Body of pancreas (tissue), 4 donors: ENCODE measurements at regions of chr10 and their contacts with region 1.

Region 1: DNA sequence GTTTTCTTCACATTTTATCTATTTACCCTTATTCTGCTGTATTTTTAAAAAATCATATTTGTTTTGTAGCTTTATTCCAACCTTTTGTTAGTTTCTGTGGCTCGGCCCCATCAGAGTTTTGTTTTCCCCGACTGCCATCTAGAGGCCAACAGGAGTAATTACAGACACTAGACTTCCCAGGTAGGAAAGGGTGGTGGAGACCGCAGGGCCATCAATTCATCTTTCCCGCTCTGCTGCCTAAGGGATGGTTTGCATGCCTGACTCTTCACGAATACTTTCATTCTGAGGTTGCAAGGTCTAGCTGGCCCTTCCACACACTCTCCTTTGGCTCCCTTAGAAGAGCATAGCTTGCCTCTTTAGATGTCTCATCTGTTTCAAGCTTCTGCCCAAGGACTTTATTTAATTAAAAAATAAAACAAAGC is 38.3 kb downstream of the LYZL2 start:
- DNase-seq: peak; percentile 25 to 46 (median 39)
- ATAC-seq: peak; percentile 68
- H3K4me3 ChIP-seq: no peak overlapping the region
- H3K27ac ChIP-seq: no peak overlapping the region
- H3K4me1 ChIP-seq: no peaks in the 10 kb centered on the region
- H3K27me3 ChIP-seq: no peaks in the 10 kb centered on the region
- CTCF ChIP-seq: peak; percentile 42 to 82 (median 76)
- POLR2A ChIP-seq: no peak

Region 2: DNA sequence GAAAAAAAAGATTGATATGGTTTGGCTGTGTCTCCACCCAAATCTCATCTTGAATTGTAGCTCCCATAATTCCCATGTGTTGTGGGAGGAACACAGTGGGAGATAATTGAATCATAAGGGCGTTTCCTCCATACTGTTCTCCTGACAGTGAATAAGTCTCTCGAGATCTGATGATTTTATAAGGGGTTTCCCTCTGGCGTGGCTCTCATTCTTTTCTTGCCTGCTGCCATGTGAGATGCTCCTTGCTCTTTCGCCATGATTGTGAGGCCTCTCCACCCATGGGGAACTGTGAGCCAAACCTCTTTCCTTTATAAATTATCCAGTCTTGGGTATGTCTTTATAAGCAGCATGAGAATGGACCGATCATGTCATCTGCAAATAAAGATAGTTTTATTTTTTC is 186.7 kb before region 1 on chr10:
- intact Hi-C with region 1: loop called (anchors 10 kb)
- DNase-seq: no peak
- ATAC-seq: no peak
- H3K4me3 ChIP-seq: no peak overlapping the region
- H3K27ac ChIP-seq: no peak overlapping the region
- H3K4me1 ChIP-seq: no peaks in the 10 kb centered on the region
- H3K27me3 ChIP-seq: no peaks in the 10 kb centered on the region
- CTCF ChIP-seq: no peak
- POLR2A ChIP-seq: no peak

Region 3: GRCh38 chr10:30829909-30830308 is 238.6 kb after region 1 on chr10:
- intact Hi-C with region 1: no loop called
- DNase-seq: no peak
- ATAC-seq: no peak
- H3K4me3 ChIP-seq: no peak overlapping the region
- H3K27ac ChIP-seq: no peak overlapping the region
- H3K4me1 ChIP-seq: peaks cover 16% of the 10 kb centered on the region
- H3K27me3 ChIP-seq: peaks cover 0 to 5% of the 10 kb centered on the region in 2 donors
- CTCF ChIP-seq: no peak
- POLR2A ChIP-seq: no peak